SK-N-SH (cell line): ENCODE measurements at regions of chr12 and their contacts with region 1.

Region 1: DNA sequence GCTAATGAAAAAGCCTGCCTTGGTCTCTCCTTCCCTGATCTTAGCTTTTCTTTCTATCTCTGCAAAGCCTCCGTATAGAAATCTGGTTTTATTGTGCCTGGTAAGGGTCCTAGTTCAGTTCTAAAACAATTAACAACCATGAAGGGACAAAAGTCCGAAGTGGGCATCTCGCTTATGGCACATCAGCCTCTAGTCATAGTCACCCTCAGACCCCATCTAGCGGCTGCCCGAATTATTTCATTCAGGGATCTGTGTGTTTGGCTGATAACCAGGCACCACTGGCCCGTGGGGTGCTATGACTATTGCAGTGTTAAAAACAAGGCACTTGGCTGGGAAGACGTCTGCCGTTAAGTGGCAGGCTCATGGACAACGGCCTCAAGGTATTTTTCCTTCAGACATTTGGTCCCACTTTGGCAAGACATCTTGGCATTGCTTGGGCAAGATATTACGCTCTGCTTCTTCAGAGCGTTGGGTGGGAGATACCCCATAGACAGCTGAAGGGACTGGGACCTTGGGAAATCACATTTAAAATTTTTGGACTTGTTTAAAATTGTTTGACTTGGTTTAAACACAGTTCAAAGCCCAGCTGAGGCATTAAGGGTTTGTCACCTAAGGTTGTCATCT is 87.1 kb downstream of the SINHCAF start:
- DNase-seq: peak; percentile 76
- H3K4me3 ChIP-seq: peak overlapping the region in 1 of 2 experiments; percentile 40; a peak in 2 of 4 replicates
- H3K27ac ChIP-seq: no peak overlapping the region
- H3K4me1 ChIP-seq: peaks cover 0 to 18% of the 10 kb centered on the region in 2 experiments; a peak in 2 of 4 replicates
- H3K27me3 ChIP-seq: no peaks in the 10 kb centered on the region; the same call in 1 of the 2 replicates
- CTCF ChIP-seq: peak; percentile 77
- EP300 ChIP-seq: no peak
- RAD21 ChIP-seq: peak; percentile 85

Region 2: GRCh38 chr12:31117203-31118011 is 121.5 kb before region 1 on chr12:
- CTCF ChIA-PET with region 1: interaction called, 34 read pairs
- POLR2A ChIA-PET with region 1: no interaction called
- DNase-seq: peak; percentile 80
- H3K4me3 ChIP-seq: peak overlapping the region; percentile 45 to 54
- H3K27ac ChIP-seq: no peak overlapping the region
- H3K4me1 ChIP-seq: peaks cover 0 to 31% of the 10 kb centered on the region in 2 experiments; a peak in 1 of 4 replicates
- H3K27me3 ChIP-seq: no peaks in the 10 kb centered on the region; the same call in 1 of the 2 replicates
- CTCF ChIP-seq: peak; percentile 61
- EP300 ChIP-seq: no peak
- RAD21 ChIP-seq: peak; percentile 44

Region 3: GRCh38 chr12:31280183-31280582 is 41.3 kb after region 1 on chr12:
- CTCF ChIA-PET with region 1: no interaction called
- POLR2A ChIA-PET with region 1: no interaction called
- DNase-seq: no peak
- H3K4me3 ChIP-seq: no peak overlapping the region
- H3K27ac ChIP-seq: no peak overlapping the region
- H3K4me1 ChIP-seq: no peaks in the 10 kb centered on the region
- H3K27me3 ChIP-seq: no peaks in the 10 kb centered on the region
- CTCF ChIP-seq: no peak
- EP300 ChIP-seq: no peak
- RAD21 ChIP-seq: no peak